Cardiac septum (tissue), 1 donor: ENCODE measurements at regions of chr4 and their contacts with region 1.

Region 1: GRCh38 chr4:41692717-41693345 is 55.7 kb downstream of the PHOX2B start:
- DNase-seq: no peak

Region 2: DNA sequence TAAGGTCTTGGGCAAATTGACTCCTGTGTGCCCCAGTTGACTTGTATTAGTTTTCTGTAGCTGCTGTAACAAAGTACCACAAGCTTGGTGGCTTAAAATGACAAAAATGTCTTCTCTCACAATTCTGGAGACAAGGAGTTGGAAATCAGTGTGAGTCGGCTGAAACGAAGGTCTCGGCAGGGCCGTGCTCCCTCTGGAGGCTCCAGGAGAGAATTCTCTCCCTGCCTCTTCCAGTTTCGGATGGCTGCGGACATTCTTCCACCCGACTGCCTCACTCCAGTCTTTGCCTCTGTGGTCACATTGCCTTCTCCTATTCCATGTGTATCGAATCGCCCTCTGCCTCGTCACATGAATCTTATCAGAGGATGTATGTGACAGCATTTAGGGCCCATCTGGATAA is 121.7 kb after region 1 on chr4:
- intact Hi-C with region 1: loop called (anchors 5 kb)
- DNase-seq: no peak

Region 3: DNA sequence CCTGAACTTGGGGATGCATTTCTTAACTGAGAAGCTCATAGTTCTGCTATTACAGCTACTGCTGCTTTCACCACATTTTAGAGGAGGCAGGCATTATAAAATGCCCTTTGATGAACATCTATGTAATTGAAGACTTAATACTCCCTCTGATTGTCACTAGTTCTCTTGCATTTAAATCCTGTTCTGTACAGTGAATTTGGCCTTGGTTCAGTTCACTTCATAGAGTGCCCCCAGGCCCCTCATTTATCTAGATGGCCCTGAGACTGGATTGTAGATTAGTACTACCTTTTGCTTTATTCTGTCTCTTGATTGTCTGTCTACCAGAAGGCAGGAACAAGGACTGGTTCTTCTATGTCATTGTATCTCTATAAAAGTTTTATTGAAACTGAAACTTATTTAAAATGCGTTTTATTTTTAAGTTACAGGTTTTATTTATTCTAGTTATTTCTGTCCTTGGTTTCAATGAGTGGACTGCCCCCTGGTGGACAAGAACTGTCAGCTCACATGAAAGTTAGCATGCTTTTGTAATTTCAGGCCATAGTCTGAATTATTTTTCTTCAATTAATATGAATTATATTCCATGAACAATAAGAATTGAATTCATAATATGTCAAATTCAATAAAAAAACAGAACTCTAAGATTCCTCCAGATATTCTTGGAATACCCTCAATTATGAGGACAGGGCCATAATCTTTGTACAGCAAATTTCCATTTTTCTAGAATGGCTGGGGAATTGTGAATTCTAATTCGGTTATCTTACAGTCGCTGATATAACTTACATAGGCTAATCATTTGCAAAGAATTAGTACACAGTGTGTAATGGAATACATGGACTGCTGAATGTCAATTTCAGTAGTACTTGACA is 195.2 kb after region 1 on chr4:
- intact Hi-C with region 1: loop called (anchors 2 kb)
- DNase-seq: no peak